ENCODE measurements at regions of chr2 and their contacts with region 1.

Region 1: DNA sequence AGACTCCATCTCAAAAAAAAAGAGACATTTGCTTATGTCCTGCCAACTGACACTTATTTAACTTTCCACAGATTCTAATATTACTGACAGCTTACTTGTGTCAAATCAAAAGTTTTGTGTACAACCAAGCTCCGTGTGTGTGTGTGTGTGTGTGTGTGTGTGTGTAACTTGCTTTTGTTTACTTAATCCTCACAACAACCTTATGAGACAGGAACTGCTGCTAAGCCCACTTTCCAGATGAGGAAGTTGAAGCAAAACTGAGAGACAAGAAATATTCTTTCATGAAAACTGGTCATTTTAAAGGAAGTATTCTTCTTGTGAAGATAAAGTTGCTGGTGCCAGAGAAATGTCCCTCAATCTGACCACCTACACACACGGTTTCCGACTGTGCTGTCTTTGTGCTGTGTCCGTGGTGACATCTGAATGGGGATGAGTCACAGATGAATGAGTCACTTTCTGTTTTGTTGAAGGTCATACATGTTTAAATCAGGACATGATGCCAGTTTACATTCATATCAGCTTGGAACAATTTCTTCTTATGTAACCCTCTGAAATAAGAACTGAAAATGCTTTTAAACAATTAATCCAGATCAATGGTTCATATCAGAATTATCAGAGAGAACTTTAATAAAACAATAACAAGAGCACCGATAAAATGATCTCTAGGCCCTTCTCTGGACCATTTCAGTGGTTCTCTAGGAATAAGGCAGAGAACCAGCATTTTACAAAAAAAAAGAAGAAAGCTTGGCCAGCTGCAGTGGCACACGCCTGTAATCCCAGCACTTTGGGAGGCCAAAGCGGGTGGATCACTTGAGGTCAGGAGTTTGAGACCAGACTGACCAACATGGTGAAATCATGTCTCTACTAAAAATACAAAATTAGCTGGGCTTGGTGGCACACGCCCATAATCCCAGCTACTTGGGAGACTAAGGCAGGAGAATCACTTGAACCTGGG is 95.5 kb downstream of the THNSL2 start:
- DNase-seq: peak; percentile 30
- ATAC-seq: no peak
- H3K4me3 ChIP-seq: no peak overlapping the region
- H3K27ac ChIP-seq: no peak overlapping the region
- H3K4me1 ChIP-seq: no peaks in the 10 kb centered on the region
- H3K27me3 ChIP-seq: peaks cover 9% of the 10 kb centered on the region
- CTCF ChIP-seq: no peak

Region 2: GRCh38 chr2:88253375-88253774 is 12.3 kb before region 1 on chr2:
- CTCF ChIA-PET with region 1: no interaction called
- POLR2A ChIA-PET with region 1: interaction called, 27 read pairs
- in situ Hi-C with region 1: no loop called
- intact Hi-C with region 1: no loop called
- DNase-seq: no peak
- ATAC-seq: no peak
- H3K4me3 ChIP-seq: no peak overlapping the region
- H3K27ac ChIP-seq: no peak overlapping the region
- H3K4me1 ChIP-seq: no peaks in the 10 kb centered on the region
- H3K27me3 ChIP-seq: peaks cover 8% of the 10 kb centered on the region; the same call in 1 of the 2 replicates
- CTCF ChIP-seq: no peak